Psoas muscle (tissue), 8 donors: ENCODE measurements at regions of chr1 and their contacts with region 1.

Region 1: GRCh38 chr1:179954493-179955297 is at the start of gene CEP350:
- DNase-seq: peak; percentile 98 to 99
- ATAC-seq: peak; percentile 94 to 98 (median 97)
- H3K4me3 ChIP-seq: peak within 1 kb of the TSS; percentile 97
- H3K27ac ChIP-seq: peak within 1 kb of the TSS; percentile 99
- H3K4me1 ChIP-seq: peaks cover 24% of the 10 kb centered on the region
- H3K27me3 ChIP-seq: no peaks in the 10 kb centered on the region
- CTCF ChIP-seq: no peak
- total RNA-seq, gene CEP350: 52.8 to 65.3 (median 61.0) TPM

Region 2: GRCh38 chr1:179882243-179883039 is 72.3 kb before region 1 on chr1 and contains the start of gene TOR1AIP1:
- intact Hi-C with region 1: loop called (anchors 2 kb)
- DNase-seq: peak; percentile 98 to 99
- ATAC-seq: peak; percentile 92 to 94 (median 92)
- H3K4me3 ChIP-seq: peak within 1 kb of the TSS; percentile 91
- H3K27ac ChIP-seq: peak within 1 kb of the TSS; percentile 99
- H3K4me1 ChIP-seq: peaks cover 48% of the 10 kb centered on the region
- H3K27me3 ChIP-seq: no peaks in the 10 kb centered on the region
- CTCF ChIP-seq: peak; percentile 49
- total RNA-seq, gene TOR1AIP1: 35.1 to 59.6 (median 53.3) TPM